ENCODE measurements at regions of chr11 and their contacts with region 1.

Region 1: GRCh38 chr11:66493130-66493529 is 12.9 kb downstream of the DPP3 start:
- H3K4me3 ChIP-seq: no peak overlapping the region
- H3K27ac ChIP-seq: no peak overlapping the region
- H3K4me1 ChIP-seq: no peaks in the 10 kb centered on the region
- CTCF ChIP-seq: no peak

Region 2: GRCh38 chr11:66510271-66510989 is 17.3 kb after region 1 on chr11 and contains the start of gene BBS1:
- CTCF ChIA-PET with region 1: no interaction called
- POLR2A ChIA-PET with region 1: interaction called, 10 read pairs
- H3K4me3 ChIP-seq: peak within 1 kb of the TSS; percentile 90
- H3K27ac ChIP-seq: no peak within 1 kb of the TSS
- H3K4me1 ChIP-seq: no peaks in the 10 kb centered on the region
- CTCF ChIP-seq: no peak

Measured in HEK293 (cell line).